HEK293 (cell line): ENCODE measurements at regions of chr15 and their contacts with region 1.

Region 1: DNA sequence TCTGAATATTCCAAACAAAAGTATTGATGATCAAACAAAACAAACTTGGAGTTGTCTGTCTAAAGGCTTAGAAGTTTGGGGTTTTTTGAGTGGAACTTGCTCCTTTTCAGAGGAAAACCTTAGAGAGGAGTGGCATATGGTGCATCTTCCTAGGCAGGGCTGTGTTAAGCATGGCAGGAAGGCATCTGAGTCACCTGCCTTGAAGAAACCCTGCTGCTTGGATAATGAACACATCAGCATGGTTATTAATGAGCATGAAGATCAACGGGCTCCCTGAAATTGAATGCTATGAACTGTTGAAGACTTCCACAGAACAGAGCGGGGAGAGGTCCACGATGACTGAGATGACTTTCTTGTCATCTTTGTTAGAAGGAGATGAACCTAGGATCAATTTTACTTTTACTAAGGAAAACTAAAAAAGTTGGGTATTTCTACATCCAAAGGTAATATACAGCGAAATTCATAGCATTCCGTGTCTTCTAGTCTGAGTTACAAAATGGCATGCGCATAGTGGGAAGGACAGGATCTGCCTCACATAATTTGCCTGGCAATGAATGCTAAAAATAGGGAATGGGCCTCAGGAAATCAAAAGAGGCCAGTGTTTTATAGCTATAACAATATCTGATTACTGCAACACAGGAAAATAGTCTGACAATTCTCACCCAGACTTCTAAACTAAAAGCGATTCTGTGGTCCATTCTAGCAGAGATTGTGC is 11.6 kb upstream of the TMED3 start:
- H3K4me3 ChIP-seq: no peak overlapping the region
- H3K27ac ChIP-seq: no peak overlapping the region
- H3K4me1 ChIP-seq: no peaks in the 10 kb centered on the region
- CTCF ChIP-seq: no peak

Region 2: GRCh38 chr15:79310983-79311900 is 12.0 kb after region 1 on chr15 and contains the start of gene TMED3:
- CTCF ChIA-PET with region 1: interaction called, 14 read pairs
- POLR2A ChIA-PET with region 1: interaction called, 3 read pairs
- H3K4me3 ChIP-seq: peak within 1 kb of the TSS; percentile 79
- H3K27ac ChIP-seq: peak within 1 kb of the TSS; percentile 63; the same call in 1 of the 2 replicates
- H3K4me1 ChIP-seq: peaks cover 6% of the 10 kb centered on the region
- CTCF ChIP-seq: peak; percentile 91

Region 3: GRCh38 chr15:79408041-79408440 is 108.8 kb after region 1 on chr15:
- CTCF ChIA-PET with region 1: no interaction called
- POLR2A ChIA-PET with region 1: no interaction called
- H3K4me3 ChIP-seq: no peak overlapping the region
- H3K27ac ChIP-seq: no peak overlapping the region
- H3K4me1 ChIP-seq: no peaks in the 10 kb centered on the region
- CTCF ChIP-seq: no peak